CD4-positive, alpha-beta memory T cell (primary cell): ENCODE measurements at regions of chr2 and their contacts with region 1.

Region 1: GRCh38 chr2:186641807-186642321 is 52.0 kb upstream of the FAM171B start:
- DNase-seq: peak in 4 of 5 donors; percentile 41 to 47 (median 44)
- H3K4me3 ChIP-seq: no peak overlapping the region
- H3K4me3 Mint-ChIP-seq: no peak overlapping the region
- H3K27ac ChIP-seq: no peak overlapping the region
- H3K27ac Mint-ChIP-seq: peak overlapping the region in 2 of 7 donors; percentile 24 to 48
- H3K4me1 ChIP-seq: no peaks in the 10 kb centered on the region
- H3K4me1 Mint-ChIP-seq: peaks cover 0 to 8% (median 5%) of the 10 kb centered on the region in 4 donors
- H3K27me3 ChIP-seq: no peaks in the 10 kb centered on the region
- H3K27me3 Mint-ChIP-seq: no peaks in the 10 kb centered on the region

Region 2: GRCh38 chr2:186503848-186504606 is 137.8 kb before region 1 on chr2:
- CTCF ChIA-PET with region 1: interaction called, 94 read pairs
- POLR2A ChIA-PET with region 1: interaction called, 4 read pairs
- intact Hi-C with region 1: loop called (anchors 1 kb)
- DNase-seq: peak in 4 of 5 donors; percentile 11 to 36 (median 26)
- H3K4me3 ChIP-seq: no peak overlapping the region
- H3K4me3 Mint-ChIP-seq: no peak overlapping the region
- H3K27ac ChIP-seq: no peak overlapping the region
- H3K27ac Mint-ChIP-seq: peak overlapping the region in 6 of 7 donors; percentile 27 to 82 (median 64)
- H3K4me1 ChIP-seq: peaks cover 3% of the 10 kb centered on the region
- H3K4me1 Mint-ChIP-seq: peaks cover 6 to 23% (median 13%) of the 10 kb centered on the region in 4 donors
- H3K27me3 ChIP-seq: no peaks in the 10 kb centered on the region
- H3K27me3 Mint-ChIP-seq: no peaks in the 10 kb centered on the region

Region 3: DNA sequence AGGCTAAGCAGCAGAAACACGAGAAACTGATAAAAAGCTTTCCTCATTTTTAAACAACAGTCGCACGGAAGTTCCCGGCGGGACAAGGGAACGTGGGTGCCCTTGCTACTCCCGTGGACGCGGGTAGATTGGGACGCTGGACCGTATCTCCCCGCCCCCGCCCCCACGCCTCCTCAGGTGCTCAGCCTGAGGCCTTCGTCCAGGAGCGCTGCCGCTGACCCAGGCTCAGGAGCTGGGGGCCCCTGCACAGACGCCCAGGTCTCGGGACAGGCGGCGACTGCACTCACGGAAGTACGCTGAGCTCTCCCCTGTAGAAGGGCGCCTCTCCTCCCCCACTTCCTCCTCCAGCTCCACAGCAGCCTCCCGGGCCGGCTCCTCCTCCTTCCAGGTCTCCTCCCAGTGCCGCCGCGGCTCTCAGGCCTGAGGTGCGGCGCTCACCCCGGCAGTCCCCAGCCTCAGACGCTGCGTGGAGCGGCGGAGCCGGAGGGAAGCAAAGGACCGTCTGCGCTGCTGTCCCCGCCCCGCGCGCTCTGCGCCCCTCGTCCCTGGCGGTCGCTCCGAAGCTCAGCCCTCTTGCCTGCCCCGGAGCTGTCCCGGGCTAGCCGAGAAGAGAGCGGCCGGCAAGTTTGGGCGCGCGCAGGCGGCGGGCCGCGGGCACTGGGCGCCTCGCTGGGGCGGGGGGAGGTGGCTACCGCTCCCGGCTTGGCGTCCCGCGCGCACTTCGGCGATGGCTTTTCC is 52.1 kb before region 1 on chr2 and contains the start of gene ITGAV:
- CTCF ChIA-PET with region 1: interaction called, 25 read pairs
- POLR2A ChIA-PET with region 1: no interaction called
- intact Hi-C with region 1: loop called (anchors 5 kb)
- DNase-seq: peak; percentile 79 to 89 (median 83)
- H3K4me3 ChIP-seq: peak within 1 kb of the TSS; percentile 77 to 85
- H3K4me3 Mint-ChIP-seq: peak within 1 kb of the TSS; percentile 88 to 96 (median 94)
- H3K27ac ChIP-seq: peak within 1 kb of the TSS; percentile 46
- H3K27ac Mint-ChIP-seq: peak within 1 kb of the TSS; percentile 73 to 93 (median 88)
- H3K4me1 ChIP-seq: peaks cover 38% of the 10 kb centered on the region
- H3K4me1 Mint-ChIP-seq: peaks cover 26 to 41% (median 31%) of the 10 kb centered on the region in 4 donors
- H3K27me3 ChIP-seq: no peaks in the 10 kb centered on the region
- H3K27me3 Mint-ChIP-seq: peaks cover 0 to 3% of the 10 kb centered on the region in 2 donors
- total RNA-seq, gene ITGAV: 11.0 to 12.0 TPM

Region 4: DNA sequence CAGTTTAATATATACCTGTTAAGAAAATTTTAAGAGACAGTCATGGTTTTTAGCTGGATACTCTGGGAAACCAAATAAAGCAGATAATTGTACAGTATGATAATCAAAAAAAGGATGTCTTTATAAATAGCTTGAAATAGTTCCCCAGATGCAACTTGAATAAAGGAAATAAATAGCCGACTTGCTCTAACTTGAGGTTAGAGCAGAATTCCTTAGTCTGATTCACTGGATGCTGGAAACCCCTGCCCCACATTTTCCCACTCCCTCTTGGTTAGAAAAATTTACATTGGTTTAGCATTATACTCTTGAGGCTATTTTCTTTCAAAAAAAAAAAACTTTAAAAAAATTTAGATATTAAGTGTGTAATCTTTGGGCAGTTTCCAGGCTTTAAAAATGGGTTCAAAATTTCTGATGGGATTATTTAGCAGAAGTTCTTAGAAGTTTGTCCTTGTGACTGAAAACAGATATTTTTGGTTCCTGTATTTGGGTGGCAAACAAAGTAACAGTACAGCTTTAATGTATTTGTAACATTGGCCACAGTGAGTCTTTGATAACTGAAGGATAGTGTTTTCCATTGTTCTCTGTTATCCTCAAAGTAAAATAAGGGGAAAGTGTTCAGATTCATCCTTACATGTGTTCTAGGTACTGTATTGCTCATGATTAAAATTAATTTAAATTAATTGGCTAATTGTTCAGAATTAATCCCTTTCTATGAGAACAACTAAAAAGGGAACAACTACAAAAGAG is 12.4 kb before region 1 on chr2:
- CTCF ChIA-PET with region 1: interaction called, 17 read pairs
- POLR2A ChIA-PET with region 1: no interaction called
- intact Hi-C with region 1: no loop called
- DNase-seq: no peak
- H3K4me3 ChIP-seq: no peak overlapping the region
- H3K4me3 Mint-ChIP-seq: no peak overlapping the region
- H3K27ac ChIP-seq: no peak overlapping the region
- H3K27ac Mint-ChIP-seq: no peak overlapping the region
- H3K4me1 ChIP-seq: no peaks in the 10 kb centered on the region
- H3K4me1 Mint-ChIP-seq: peaks cover 0 to 3% (median 0%) of the 10 kb centered on the region in 4 donors
- H3K27me3 ChIP-seq: no peaks in the 10 kb centered on the region
- H3K27me3 Mint-ChIP-seq: no peaks in the 10 kb centered on the region

Region 5: DNA sequence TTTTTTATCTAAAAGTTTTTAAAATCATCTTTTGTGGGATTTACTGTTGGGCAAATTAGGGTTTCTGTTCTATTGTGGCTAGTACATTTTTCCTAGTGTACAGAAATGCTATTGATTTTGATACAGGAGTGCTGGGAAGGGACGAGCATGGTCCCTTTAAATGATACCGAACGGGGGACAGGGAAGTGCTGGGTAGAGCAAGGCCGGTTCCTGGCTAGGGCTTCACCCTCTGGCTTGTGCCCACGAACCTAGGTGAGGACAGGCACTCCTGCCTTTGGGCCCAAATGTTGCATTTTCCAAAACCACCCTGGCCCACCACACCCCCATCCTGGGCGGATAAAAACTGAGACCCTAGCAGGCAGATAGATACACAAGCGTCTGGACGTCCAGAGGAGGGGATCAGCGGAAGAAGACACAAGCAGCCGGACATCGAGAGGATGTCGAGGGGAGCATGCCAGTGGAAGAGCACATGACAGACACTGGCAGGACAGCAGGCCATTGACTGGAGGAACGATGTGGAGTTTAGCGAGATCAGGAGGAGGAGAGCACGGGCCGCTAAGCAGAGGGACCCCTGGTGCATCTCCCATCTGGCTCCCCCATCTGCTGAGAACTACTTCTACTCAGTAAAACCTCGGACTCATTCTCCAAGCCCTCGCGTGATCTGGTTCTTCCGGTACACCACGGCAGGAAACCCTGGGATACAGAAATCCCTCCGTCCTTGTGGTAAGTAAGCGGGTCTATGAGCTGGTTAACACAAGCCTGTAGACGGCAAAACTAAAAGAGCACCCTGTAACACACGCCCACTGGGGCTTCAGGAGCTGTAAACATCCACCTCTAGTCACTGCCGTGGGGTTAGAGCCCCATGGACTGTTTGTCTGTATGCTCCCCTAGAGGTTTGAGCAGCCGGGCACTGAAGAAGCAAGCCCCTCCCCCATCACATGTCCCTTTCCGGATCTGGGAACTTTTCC is 819.7 kb after region 1 on chr2:
- CTCF ChIA-PET with region 1: no interaction called
- POLR2A ChIA-PET with region 1: no interaction called
- intact Hi-C with region 1: no loop called
- DNase-seq: no peak
- H3K4me3 ChIP-seq: no peak overlapping the region
- H3K4me3 Mint-ChIP-seq: no peak overlapping the region
- H3K27ac ChIP-seq: no peak overlapping the region
- H3K27ac Mint-ChIP-seq: no peak overlapping the region
- H3K4me1 ChIP-seq: no peaks in the 10 kb centered on the region
- H3K4me1 Mint-ChIP-seq: no peaks in the 10 kb centered on the region
- H3K27me3 ChIP-seq: no peaks in the 10 kb centered on the region
- H3K27me3 Mint-ChIP-seq: no peaks in the 10 kb centered on the region